IMR-90 (cell line): ENCODE measurements at regions of chr1 and their contacts with region 1.

Region 1: DNA sequence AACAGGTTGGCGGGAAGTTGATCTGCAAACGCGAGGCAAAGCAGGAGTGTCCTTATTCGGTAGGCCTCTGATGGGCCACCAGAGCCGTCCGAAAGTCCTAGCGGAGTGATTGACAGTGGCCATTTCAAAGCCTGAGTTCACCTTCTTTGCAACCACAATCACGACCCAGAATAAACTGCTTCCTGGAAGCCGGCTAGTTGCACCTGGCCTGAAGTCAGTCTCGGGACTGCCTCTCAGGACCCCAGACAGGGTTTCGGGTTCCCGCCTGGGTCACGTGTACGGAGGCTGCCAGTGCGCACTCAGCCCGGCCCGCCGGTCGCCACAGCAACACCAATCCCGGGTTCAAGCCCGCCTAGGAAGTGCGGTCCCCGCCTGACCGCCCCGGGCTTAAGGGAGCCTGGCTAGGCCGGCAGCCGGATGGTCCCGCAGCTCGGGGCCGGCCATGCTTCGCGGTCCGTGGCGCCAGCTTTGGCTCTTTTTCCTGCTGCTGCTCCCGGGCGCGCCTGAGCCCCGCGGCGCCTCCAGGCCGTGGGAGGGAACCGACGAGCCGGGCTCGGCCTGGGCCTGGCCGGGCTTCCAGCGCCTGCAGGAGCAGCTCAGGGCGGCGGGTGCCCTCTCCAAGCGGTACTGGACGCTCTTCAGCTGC is at the start of gene TOR3A:
- DNase-seq: peak; percentile 85
- ATAC-seq: peak; percentile 92
- H3K4me3 ChIP-seq: peak within 1 kb of the TSS; percentile 79
- H3K27ac ChIP-seq: peak within 1 kb of the TSS; percentile 73
- H3K4me1 ChIP-seq: peaks cover 12% of the 10 kb centered on the region
- H3K27me3 ChIP-seq: no peaks in the 10 kb centered on the region
- CTCF ChIP-seq: no peak
- POLR2A ChIP-seq: peak; percentile 64; the same call in 1 of the 2 replicates
- RAD21 ChIP-seq: 0 out of 2 replicates have a peak, but pooled peaks have one; percentile 8
- total RNA-seq, gene TOR3A: 11.9 and 16.8 TPM in 2 replicates

Region 2: GRCh38 chr1:178821134-178821866 is 260.5 kb before region 1 on chr1:
- CTCF ChIA-PET with region 1: no interaction called
- POLR2A ChIA-PET with region 1: no interaction called
- dilution Hi-C with region 1: no loop called
- in situ Hi-C with region 1: no loop called
- intact Hi-C with region 1: no loop called
- DNase-seq: no peak
- ATAC-seq: no peak
- H3K4me3 ChIP-seq: no peak overlapping the region
- H3K27ac ChIP-seq: no peak overlapping the region
- H3K4me1 ChIP-seq: peaks cover 5% of the 10 kb centered on the region
- H3K27me3 ChIP-seq: no peaks in the 10 kb centered on the region
- CTCF ChIP-seq: no peak
- POLR2A ChIP-seq: no peak
- RAD21 ChIP-seq: no peak

Region 3: GRCh38 chr1:179104611-179105250 is 22.9 kb after region 1 on chr1:
- CTCF ChIA-PET with region 1: no interaction called
- POLR2A ChIA-PET with region 1: no interaction called
- dilution Hi-C with region 1: no loop called
- in situ Hi-C with region 1: no loop called
- intact Hi-C with region 1: loop called (anchors 1 kb)
- DNase-seq: no peak
- ATAC-seq: no peak
- H3K4me3 ChIP-seq: no peak overlapping the region
- H3K27ac ChIP-seq: no peak overlapping the region
- H3K4me1 ChIP-seq: peaks cover 10% of the 10 kb centered on the region
- H3K27me3 ChIP-seq: no peaks in the 10 kb centered on the region
- CTCF ChIP-seq: no peak
- POLR2A ChIP-seq: no peak
- RAD21 ChIP-seq: no peak

Region 4: DNA sequence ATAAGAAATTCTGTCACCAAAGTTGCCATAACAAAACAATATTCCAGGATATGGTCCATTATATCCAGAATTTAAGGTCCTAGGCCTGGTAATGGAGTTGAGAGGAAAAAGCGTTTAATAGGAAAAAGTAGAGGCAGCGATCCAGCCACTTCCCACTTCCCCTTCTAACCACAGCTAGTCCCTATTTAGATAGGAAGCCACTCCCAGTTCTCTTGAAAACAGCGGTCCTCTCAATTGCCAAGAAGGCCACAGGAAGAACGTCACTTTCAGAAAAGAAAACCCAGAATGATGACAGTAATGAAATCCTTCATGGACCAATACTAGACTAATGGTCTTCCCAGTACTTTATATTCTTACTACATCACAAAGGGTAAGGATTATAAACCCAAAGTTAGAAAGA is 109.1 kb after region 1 on chr1:
- CTCF ChIA-PET with region 1: interaction called, 5 read pairs
- POLR2A ChIA-PET with region 1: no interaction called
- dilution Hi-C with region 1: no loop called
- in situ Hi-C with region 1: no loop called
- intact Hi-C with region 1: loop called (anchors 2 kb)
- DNase-seq: no peak
- ATAC-seq: no peak
- H3K4me3 ChIP-seq: no peak overlapping the region
- H3K27ac ChIP-seq: no peak overlapping the region
- H3K4me1 ChIP-seq: peaks cover 2% of the 10 kb centered on the region; the same call in 1 of the 2 replicates
- H3K27me3 ChIP-seq: no peaks in the 10 kb centered on the region
- CTCF ChIP-seq: no peak
- POLR2A ChIP-seq: no peak
- RAD21 ChIP-seq: no peak

Region 5: DNA sequence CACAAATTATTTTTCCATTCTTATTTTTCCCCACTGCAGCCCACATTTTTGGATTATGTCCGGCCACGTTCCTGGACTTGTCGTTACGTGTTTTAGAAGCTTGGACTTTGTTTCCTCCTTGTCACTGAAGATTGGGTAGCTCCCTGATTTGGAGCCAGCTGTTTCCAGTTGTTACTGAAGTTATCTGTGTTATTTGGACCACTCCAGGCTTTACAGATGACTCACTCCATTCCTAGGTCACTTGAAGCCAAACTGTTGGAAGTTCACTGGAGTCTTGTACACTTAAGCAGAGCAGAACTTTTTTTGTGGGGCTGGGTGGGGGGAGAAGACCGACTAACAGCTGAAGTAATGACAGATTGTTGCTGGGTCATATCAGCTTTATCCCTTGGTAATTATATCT is 271.7 kb after region 1 on chr1:
- CTCF ChIA-PET with region 1: no interaction called
- POLR2A ChIA-PET with region 1: no interaction called
- dilution Hi-C with region 1: no loop called
- in situ Hi-C with region 1: no loop called
- intact Hi-C with region 1: loop called (anchors 5 kb)
- DNase-seq: peak; percentile 80
- ATAC-seq: peak; percentile 97
- H3K4me3 ChIP-seq: no peak overlapping the region
- H3K27ac ChIP-seq: peak overlapping the region; percentile 80; the same call in 1 of the 2 replicates
- H3K4me1 ChIP-seq: peaks cover 2% of the 10 kb centered on the region; the same call in 1 of the 2 replicates
- H3K27me3 ChIP-seq: no peaks in the 10 kb centered on the region
- CTCF ChIP-seq: no peak
- POLR2A ChIP-seq: no peak
- RAD21 ChIP-seq: no peak

Region 6: DNA sequence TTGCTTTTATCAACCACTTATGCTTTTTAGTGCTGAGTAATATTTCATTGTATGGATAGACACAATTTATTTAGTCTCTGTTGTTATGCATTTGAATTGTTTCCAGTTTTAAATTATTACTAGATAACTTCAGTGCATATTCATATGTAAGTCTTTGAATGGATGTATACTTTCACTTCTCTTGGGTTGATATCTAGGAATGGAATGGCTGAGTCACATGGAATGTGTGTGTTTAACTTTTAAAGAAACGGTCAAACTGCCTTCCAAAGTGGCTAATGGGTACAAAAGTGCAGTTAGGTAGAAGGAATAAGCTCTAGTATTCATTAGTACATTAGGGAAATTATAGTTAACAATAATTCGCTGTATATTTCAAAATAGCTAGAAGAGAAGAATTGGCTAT is 411.5 kb after region 1 on chr1:
- CTCF ChIA-PET with region 1: no interaction called
- POLR2A ChIA-PET with region 1: interaction called, 12 read pairs
- dilution Hi-C with region 1: no loop called
- in situ Hi-C with region 1: no loop called
- intact Hi-C with region 1: no loop called
- DNase-seq: peak; percentile 75
- ATAC-seq: peak; percentile 94
- H3K4me3 ChIP-seq: no peak overlapping the region
- H3K27ac ChIP-seq: no peak overlapping the region
- H3K4me1 ChIP-seq: no peaks in the 10 kb centered on the region
- H3K27me3 ChIP-seq: no peaks in the 10 kb centered on the region
- CTCF ChIP-seq: no peak
- POLR2A ChIP-seq: no peak
- RAD21 ChIP-seq: no peak